ENCODE measurements at regions of chr13 and their contacts with region 1.

Region 1: DNA sequence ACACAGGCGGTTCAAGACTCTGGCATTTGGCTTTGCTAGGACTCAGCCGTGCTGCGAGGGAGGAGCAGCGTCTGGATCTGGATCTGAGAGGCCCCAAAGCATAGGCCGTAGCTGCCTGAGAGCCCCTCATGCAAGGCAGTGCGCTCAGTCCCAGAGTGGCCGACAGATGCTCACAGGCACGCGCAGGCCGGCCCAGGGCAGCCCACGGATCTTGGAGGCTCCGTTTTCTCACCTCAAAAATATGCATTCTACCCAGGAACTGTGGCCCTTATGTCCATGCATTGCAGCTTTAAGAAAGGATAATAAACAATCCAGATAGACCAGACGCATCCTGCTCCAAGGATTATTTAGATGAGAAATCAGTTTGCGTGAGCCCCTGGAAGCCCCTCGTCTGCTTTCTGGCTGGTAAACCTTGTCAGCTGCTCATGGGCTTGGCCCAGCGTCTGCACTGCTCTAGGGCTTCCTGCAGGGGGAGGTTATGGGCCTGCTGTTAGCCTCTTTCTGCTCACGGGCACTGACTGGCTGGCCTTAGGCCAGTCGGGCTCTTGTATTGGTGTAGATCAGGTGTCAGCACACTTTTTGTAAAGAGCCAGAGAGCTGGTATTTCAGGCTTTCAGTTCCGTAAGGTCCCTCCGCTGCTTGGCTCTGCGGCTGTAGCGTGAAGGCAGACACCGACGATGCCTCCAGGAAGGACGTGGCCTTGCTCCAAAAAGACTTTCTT is 24.2 kb downstream of the TEX29 start:
- DNase-seq: no peak
- ATAC-seq: no peak
- H3K4me3 ChIP-seq: no peak overlapping the region
- H3K4me3 Mint-ChIP-seq: no peak overlapping the region
- H3K27ac ChIP-seq: no peak overlapping the region
- H3K27ac Mint-ChIP-seq: no peak overlapping the region
- H3K4me1 ChIP-seq: no peaks in the 10 kb centered on the region
- H3K4me1 Mint-ChIP-seq: no peaks in the 10 kb centered on the region
- H3K27me3 ChIP-seq: no peaks in the 10 kb centered on the region
- H3K27me3 Mint-ChIP-seq: no peaks in the 10 kb centered on the region
- CTCF ChIP-seq: no peak

Region 2: GRCh38 chr13:110737555-110737954 is 607.1 kb before region 1 on chr13:
- CTCF ChIA-PET with region 1: no interaction called
- POLR2A ChIA-PET with region 1: no interaction called
- intact Hi-C with region 1: no loop called
- DNase-seq: no peak
- ATAC-seq: no peak
- H3K4me3 ChIP-seq: no peak overlapping the region
- H3K4me3 Mint-ChIP-seq: no peak overlapping the region
- H3K27ac ChIP-seq: no peak overlapping the region
- H3K27ac Mint-ChIP-seq: no peak overlapping the region
- H3K4me1 ChIP-seq: no peaks in the 10 kb centered on the region
- H3K4me1 Mint-ChIP-seq: no peaks in the 10 kb centered on the region
- H3K27me3 ChIP-seq: no peaks in the 10 kb centered on the region
- H3K27me3 Mint-ChIP-seq: no peaks in the 10 kb centered on the region
- CTCF ChIP-seq: no peak

Region 3: DNA sequence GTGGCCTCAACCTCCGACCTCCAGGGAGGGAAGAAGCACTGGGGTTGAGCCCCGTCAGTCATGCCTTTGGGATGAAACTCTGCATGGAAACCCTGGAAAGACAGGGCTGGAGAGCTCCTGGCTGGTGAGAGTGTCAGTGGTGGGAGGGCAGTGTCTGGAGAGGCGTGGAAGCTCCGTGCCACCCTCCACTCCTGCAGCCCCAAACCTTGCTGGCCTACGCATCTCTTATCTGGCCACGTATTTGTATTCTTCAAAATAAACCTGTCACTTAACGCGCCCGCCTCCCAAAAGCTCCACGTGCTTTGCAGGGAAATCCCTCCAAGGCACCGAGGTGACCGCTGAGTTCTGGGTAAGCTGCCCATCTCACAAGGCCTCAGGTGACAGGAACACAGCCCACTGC is 60.1 kb after region 1 on chr13:
- CTCF ChIA-PET with region 1: interaction called, 4 read pairs
- POLR2A ChIA-PET with region 1: no interaction called
- intact Hi-C with region 1: loop called in 1 of 2 experiments (anchors 2 kb)
- DNase-seq: no peak
- ATAC-seq: no peak
- H3K4me3 ChIP-seq: no peak overlapping the region
- H3K4me3 Mint-ChIP-seq: no peak overlapping the region
- H3K27ac ChIP-seq: no peak overlapping the region
- H3K27ac Mint-ChIP-seq: no peak overlapping the region
- H3K4me1 ChIP-seq: no peaks in the 10 kb centered on the region
- H3K4me1 Mint-ChIP-seq: no peaks in the 10 kb centered on the region
- H3K27me3 ChIP-seq: no peaks in the 10 kb centered on the region
- H3K27me3 Mint-ChIP-seq: peaks cover 3% of the 10 kb centered on the region
- CTCF ChIP-seq: no peak

Measured in CD8-positive, alpha-beta T cell (primary cell).